ENCODE measurements at regions of chr9 and their contacts with region 1.

Region 1: GRCh38 chr9:91775011-91775707 is 174.9 kb downstream of the ROR2 start:
- DNase-seq: no peak
- H3K4me3 ChIP-seq: no peak overlapping the region
- CTCF ChIP-seq: peak; percentile 92

Region 2: GRCh38 chr9:91847581-91848091 is 72.5 kb after region 1 on chr9:
- in situ Hi-C with region 1: loop called (anchors 5 kb)
- DNase-seq: no peak
- H3K4me3 ChIP-seq: no peak overlapping the region
- CTCF ChIP-seq: no peak

Region 3: DNA sequence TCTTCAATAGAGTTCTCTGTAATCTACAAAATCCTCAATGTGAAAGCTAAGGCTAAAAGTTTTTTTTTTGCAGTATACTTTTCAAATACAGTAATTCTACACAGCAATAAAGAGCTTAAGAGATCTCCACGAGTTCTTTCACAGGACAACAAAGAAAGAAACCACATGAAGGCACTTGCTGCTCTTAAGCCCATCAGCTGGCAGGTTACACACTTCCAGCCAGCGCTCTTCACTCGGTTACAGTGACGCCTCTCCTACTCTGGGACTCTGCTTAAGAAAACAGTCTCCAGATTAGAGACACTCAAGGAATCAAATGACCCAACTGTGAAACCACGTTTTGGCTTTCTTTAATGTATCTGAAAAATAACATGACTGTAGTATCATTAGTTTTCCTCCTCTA is 89.9 kb after region 1 on chr9:
- in situ Hi-C with region 1: no loop called
- DNase-seq: no peak
- H3K4me3 ChIP-seq: no peak overlapping the region
- CTCF ChIP-seq: no peak

Region 4: GRCh38 chr9:92029553-92029952 is 254.4 kb after region 1 on chr9:
- in situ Hi-C with region 1: loop called (anchors 10 kb)
- DNase-seq: no peak
- H3K4me3 ChIP-seq: no peak overlapping the region
- CTCF ChIP-seq: peak; percentile 32